Heart right ventricle (tissue), 16 donors: ENCODE measurements at regions of chr2 and their contacts with region 1.

Region 1: GRCh38 chr2:56871644-56872043 is 687.9 kb downstream of the CCDC85A start:
- DNase-seq: no peak
- ATAC-seq: no peak
- H3K4me3 ChIP-seq: no peak overlapping the region
- H3K27ac ChIP-seq: no peak overlapping the region
- H3K4me1 ChIP-seq: no peaks in the 10 kb centered on the region
- H3K27me3 ChIP-seq: no peaks in the 10 kb centered on the region
- CTCF ChIP-seq: no peak

Region 2: GRCh38 chr2:56831780-56832179 is 39.9 kb before region 1 on chr2:
- intact Hi-C with region 1: loop called in 1 of 10 experiments (anchors 1 kb)
- DNase-seq: no peak
- ATAC-seq: no peak
- H3K4me3 ChIP-seq: no peak overlapping the region
- H3K27ac ChIP-seq: no peak overlapping the region
- H3K4me1 ChIP-seq: no peaks in the 10 kb centered on the region
- H3K27me3 ChIP-seq: no peaks in the 10 kb centered on the region
- CTCF ChIP-seq: no peak